ENCODE measurements at regions of chr3 and their contacts with region 1.

Region 1: GRCh38 chr3:196081791-196082618 is at the start of gene TFRC:
- DNase-seq: peak; percentile 93
- H3K4me3 Mint-ChIP-seq: peak within 1 kb of the TSS; percentile 99
- H3K27ac Mint-ChIP-seq: peak within 1 kb of the TSS; percentile 95
- H3K4me1 Mint-ChIP-seq: peaks cover 29% of the 10 kb centered on the region
- H3K27me3 Mint-ChIP-seq: no peaks in the 10 kb centered on the region
- total RNA-seq, gene TFRC: 644 and 680 TPM in 2 replicates

Region 2: GRCh38 chr3:196047391-196048030 is 34.5 kb before region 1 on chr3:
- intact Hi-C with region 1: no loop called
- DNase-seq: no peak
- H3K4me3 Mint-ChIP-seq: no peak overlapping the region
- H3K27ac Mint-ChIP-seq: no peak overlapping the region
- H3K4me1 Mint-ChIP-seq: peaks cover 14% of the 10 kb centered on the region
- H3K27me3 Mint-ChIP-seq: no peaks in the 10 kb centered on the region

Region 3: GRCh38 chr3:196111939-196112386 is 30.0 kb after region 1 on chr3:
- intact Hi-C with region 1: loop called (anchors 1 kb)
- DNase-seq: no peak
- H3K4me3 Mint-ChIP-seq: peak overlapping the region; percentile 17
- H3K27ac Mint-ChIP-seq: peak overlapping the region; percentile 95
- H3K4me1 Mint-ChIP-seq: peaks cover 17% of the 10 kb centered on the region
- H3K27me3 Mint-ChIP-seq: no peaks in the 10 kb centered on the region

Measured in activated T-helper 2 cell treated with anti-CD3 and anti-CD28 coated beads, Interferon-gamma antibody, Interleukin-2, Interleukin-4, amounts not matched to agents 10 μg/mL and 5 μg/mL and 100 μg/mL, durations not matched to agents 14 hours and 24 hours and 36 hours (primary cell).